BJ (cell line): ENCODE measurements at regions of chr12 and their contacts with region 1.

Region 1: GRCh38 chr12:49580572-49581535 is 12.9 kb upstream of the MCRS1 start:
- DNase-seq: no peak
- H3K4me3 ChIP-seq: no peak overlapping the region
- H3K27me3 ChIP-seq: no peaks in the 10 kb centered on the region
- CTCF ChIP-seq: peak; percentile 95

Region 2: GRCh38 chr12:49567611-49568441 is 13.0 kb before region 1 on chr12 and contains the start of gene MCRS1:
- CTCF ChIA-PET with region 1: interaction called, 28 read pairs
- POLR2A ChIA-PET with region 1: no interaction called
- DNase-seq: peak; percentile 37
- H3K4me3 ChIP-seq: peak within 1 kb of the TSS; percentile 71
- H3K27me3 ChIP-seq: no peaks in the 10 kb centered on the region
- CTCF ChIP-seq: no peak
- polyA plus RNA-seq, gene MCRS1: 58.6 and 96.0 TPM in 2 replicates

Region 3: GRCh38 chr12:49604856-49605255 is 24.0 kb after region 1 on chr12:
- CTCF ChIA-PET with region 1: interaction called, 18 read pairs
- POLR2A ChIA-PET with region 1: no interaction called
- DNase-seq: no peak
- H3K4me3 ChIP-seq: no peak overlapping the region
- H3K27me3 ChIP-seq: no peaks in the 10 kb centered on the region
- CTCF ChIP-seq: no peak